Left cardiac atrium (tissue), 4 donors: ENCODE measurements at regions of chr18 and their contacts with region 1.

Region 1: DNA sequence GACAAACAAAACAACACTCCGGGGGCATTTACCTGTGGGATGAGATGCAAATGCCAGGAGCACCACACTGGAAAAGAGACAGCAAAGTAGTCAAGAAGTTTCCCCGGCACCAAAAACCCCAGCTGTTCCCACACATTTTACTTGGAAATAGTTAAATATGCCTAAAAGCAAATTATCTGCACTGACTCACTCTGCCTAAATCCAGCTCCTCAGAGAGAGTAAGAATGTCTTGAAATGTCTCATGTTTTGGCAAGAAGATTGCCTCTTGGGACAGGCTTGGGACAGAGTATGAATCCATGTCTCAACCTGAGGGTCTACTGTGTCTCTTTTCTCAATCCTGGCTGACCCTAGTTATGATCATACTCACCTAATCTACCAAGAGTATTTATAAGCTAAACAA is 87.5 kb upstream of the RIOK3 start:
- DNase-seq: no peak
- ATAC-seq: peak; percentile 87 to 94

Region 2: GRCh38 chr18:23231340-23232021 is 134.1 kb before region 1 on chr18:
- intact Hi-C with region 1: loop called in 1 of 2 experiments (anchors 10 kb)
- DNase-seq: peak; percentile 75
- ATAC-seq: peak; percentile 71 to 87